PC-3 (cell line): ENCODE measurements at regions of chr2 and their contacts with region 1.

Region 1: GRCh38 chr2:24792874-24793760 is at the starts of genes CENPO and PTRHD1:
- DNase-seq: peak; percentile 96
- ATAC-seq: peak; percentile 86
- H3K4me3 ChIP-seq: peak within 1 kb of the TSS; percentile 76
- H3K27ac ChIP-seq: peak within 1 kb of the TSS; percentile 86
- H3K4me1 ChIP-seq: peaks cover 23% of the 10 kb centered on the region
- H3K27me3 ChIP-seq: no peaks in the 10 kb centered on the region
- CTCF ChIP-seq: peak; percentile 72
- total RNA-seq, gene CENPO: 41.4 and 68.5 TPM in 2 replicates
- total RNA-seq, gene PTRHD1: 35.8 and 68.6 TPM in 2 replicates

Region 2: GRCh38 chr2:24409700-24410556 is 383.2 kb before region 1 on chr2:
- CTCF ChIA-PET with region 1: interaction called, 3 read pairs
- POLR2A ChIA-PET with region 1: no interaction called
- intact Hi-C with region 1: loop called (anchors 1 kb)
- DNase-seq: peak; percentile 82
- ATAC-seq: peak; percentile 96
- H3K4me3 ChIP-seq: no peak overlapping the region
- H3K27ac ChIP-seq: no peak overlapping the region
- H3K4me1 ChIP-seq: no peaks in the 10 kb centered on the region
- H3K27me3 ChIP-seq: no peaks in the 10 kb centered on the region
- CTCF ChIP-seq: peak; percentile 94

Region 3: DNA sequence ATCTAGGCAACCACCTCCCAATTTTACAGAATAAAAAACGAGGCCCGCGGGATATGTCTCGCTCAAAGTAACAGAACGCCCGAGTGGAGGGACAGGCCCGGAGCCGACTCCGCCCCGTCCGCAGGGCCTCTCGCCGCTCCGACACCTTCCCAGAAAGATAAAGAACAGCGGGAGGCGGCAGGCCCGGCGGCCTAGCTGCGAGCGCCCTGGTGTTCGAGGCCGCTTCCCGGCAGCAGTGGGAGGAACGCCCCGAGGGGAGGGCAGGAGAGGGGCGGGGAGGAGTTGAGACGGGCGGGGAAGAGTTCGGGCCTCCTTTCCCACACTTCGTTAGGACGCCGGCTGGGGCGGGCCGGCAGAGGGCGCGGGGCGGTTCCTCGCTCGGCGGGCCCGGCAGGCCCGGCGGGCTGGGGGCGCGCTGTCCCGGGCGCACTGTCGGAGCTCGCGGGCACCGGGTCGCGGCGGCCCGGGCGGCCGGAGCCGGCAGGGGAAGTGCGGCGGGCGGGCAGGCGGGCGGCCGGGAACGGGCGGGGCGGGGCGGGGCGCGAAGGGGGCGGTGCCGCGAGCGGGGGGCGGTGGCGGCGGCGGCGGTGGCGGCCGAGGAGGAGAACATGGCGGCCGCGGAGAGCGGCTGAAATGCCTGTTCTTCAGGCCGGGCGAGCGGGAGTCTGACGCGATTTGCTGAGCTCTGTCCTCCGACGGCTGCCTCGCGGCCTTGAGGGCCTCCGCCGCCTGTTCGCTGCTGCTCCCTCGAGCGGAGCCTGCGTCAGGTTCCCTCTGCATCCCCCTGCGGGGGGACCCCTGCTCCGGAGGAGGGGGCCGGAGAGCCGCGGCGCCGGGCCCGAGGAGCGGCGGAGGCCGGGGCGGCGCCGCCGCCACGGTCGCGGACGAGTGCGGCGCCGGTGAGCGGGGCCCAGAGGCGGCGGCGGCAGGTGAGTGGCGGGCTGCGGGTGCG is 302.2 kb before region 1 on chr2 and contains the start of gene NCOA1:
- CTCF ChIA-PET with region 1: interaction called, 3 read pairs
- POLR2A ChIA-PET with region 1: no interaction called
- intact Hi-C with region 1: loop called (anchors 5 kb)
- DNase-seq: peak; percentile 82
- ATAC-seq: peak; percentile 84
- H3K4me3 ChIP-seq: peak within 1 kb of the TSS; percentile 88
- H3K27ac ChIP-seq: peak within 1 kb of the TSS; percentile 4; the same call in 1 of the 2 replicates
- H3K4me1 ChIP-seq: peaks cover 29% of the 10 kb centered on the region
- H3K27me3 ChIP-seq: no peaks in the 10 kb centered on the region
- CTCF ChIP-seq: no peak
- total RNA-seq, gene NCOA1: 7.5 and 8.2 TPM in 2 replicates

Region 4: DNA sequence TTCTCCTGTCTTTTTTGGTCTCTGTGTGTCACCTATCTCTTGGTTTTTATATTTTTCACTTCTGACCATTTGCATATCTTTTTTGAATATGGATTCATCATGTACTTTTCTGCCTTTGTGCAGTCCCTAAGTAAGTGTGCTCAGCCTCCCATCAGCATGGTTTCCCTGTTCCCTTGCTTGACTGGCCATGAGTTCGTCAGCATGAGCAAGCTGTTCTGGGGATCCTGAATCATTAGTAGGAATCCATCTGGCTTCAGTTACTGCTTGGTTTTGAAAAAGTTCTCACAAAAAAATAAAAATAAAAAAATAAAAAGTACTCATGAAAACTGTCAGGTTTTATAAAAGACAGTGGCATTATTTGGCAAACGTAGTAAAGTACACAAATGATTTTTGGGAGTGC is 157.9 kb before region 1 on chr2:
- CTCF ChIA-PET with region 1: no interaction called
- POLR2A ChIA-PET with region 1: no interaction called
- intact Hi-C with region 1: no loop called
- DNase-seq: no peak
- ATAC-seq: no peak
- H3K4me3 ChIP-seq: no peak overlapping the region
- H3K27ac ChIP-seq: no peak overlapping the region
- H3K4me1 ChIP-seq: no peaks in the 10 kb centered on the region
- H3K27me3 ChIP-seq: no peaks in the 10 kb centered on the region
- CTCF ChIP-seq: no peak

Region 5: DNA sequence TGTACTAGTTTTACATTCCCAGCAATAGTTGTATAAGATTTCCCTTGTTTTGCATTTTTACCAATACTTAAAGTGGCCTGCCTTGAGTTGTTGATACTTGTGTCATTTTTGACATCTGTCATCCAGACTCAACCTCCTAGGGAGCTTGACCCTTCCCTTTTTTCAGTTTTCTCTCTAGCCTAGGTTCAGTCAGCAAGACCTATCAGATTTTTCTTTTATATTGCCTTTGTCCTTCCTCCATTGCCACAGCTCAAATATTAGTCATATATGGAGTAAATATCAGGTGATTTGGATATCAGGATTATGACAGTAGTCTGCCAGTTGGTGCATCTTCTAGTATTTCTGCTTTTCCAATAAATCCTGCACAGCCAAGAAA is 13.5 kb after region 1 on chr2:
- CTCF ChIA-PET with region 1: interaction called, 7 read pairs
- POLR2A ChIA-PET with region 1: interaction called, 4 read pairs
- intact Hi-C with region 1: loop called (anchors 1 kb)
- DNase-seq: peak; percentile 62
- ATAC-seq: peak; percentile 87
- H3K4me3 ChIP-seq: no peak overlapping the region
- H3K27ac ChIP-seq: peak overlapping the region; percentile 69
- H3K4me1 ChIP-seq: peaks cover 44% of the 10 kb centered on the region
- H3K27me3 ChIP-seq: no peaks in the 10 kb centered on the region
- CTCF ChIP-seq: no peak

Region 6: GRCh38 chr2:24816884-24817283 is 23.8 kb after region 1 on chr2:
- CTCF ChIA-PET with region 1: interaction called, 11 read pairs
- POLR2A ChIA-PET with region 1: no interaction called
- intact Hi-C with region 1: loop called (anchors 1 kb)
- DNase-seq: peak; percentile 44
- ATAC-seq: peak; percentile 78
- H3K4me3 ChIP-seq: no peak overlapping the region
- H3K27ac ChIP-seq: 0 out of 2 replicates have a peak overlapping the region, but pooled peaks have one; percentile 2
- H3K4me1 ChIP-seq: peaks cover under 1% of the 10 kb centered on the region; the same call in 1 of the 2 replicates
- H3K27me3 ChIP-seq: no peaks in the 10 kb centered on the region
- CTCF ChIP-seq: no peak